ENCODE measurements at regions of chr7 and their contacts with region 1.

Region 1: DNA sequence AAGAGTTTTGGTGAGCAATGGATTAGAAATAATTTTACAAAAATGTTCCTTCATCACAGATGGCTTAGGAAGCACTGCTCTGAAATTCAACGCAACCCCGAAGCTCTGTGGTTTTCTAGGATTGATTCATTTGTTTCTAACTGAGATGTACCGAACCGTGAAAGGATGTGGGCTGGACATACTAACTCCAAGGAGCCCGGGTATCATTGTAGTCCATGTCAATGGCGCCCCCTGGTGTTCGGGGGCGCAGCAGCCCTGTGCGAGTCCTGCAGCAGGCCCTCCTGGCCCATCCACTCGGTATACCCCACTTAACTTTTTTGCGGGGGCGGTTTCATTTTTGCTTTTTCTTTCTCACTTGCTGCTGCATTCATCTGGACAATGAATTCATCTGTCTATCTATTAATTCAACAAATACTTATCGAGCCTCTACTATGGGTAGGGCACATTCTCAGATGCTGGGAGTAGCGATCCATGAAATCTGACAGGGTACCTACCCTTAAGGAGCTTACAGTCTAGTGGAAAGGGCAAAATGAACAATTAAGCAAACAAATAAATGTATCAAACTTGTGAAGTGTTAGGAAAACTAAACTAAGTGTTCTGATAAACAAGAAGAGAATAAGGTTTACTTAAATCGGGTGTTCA is 25.2 kb upstream of the ITPRID1 start:
- DNase-seq: peak; percentile 18
- H3K4me3 Mint-ChIP-seq: no peak overlapping the region
- H3K27ac Mint-ChIP-seq: no peak overlapping the region
- H3K4me1 Mint-ChIP-seq: no peaks in the 10 kb centered on the region
- H3K27me3 Mint-ChIP-seq: no peaks in the 10 kb centered on the region

Region 2: DNA sequence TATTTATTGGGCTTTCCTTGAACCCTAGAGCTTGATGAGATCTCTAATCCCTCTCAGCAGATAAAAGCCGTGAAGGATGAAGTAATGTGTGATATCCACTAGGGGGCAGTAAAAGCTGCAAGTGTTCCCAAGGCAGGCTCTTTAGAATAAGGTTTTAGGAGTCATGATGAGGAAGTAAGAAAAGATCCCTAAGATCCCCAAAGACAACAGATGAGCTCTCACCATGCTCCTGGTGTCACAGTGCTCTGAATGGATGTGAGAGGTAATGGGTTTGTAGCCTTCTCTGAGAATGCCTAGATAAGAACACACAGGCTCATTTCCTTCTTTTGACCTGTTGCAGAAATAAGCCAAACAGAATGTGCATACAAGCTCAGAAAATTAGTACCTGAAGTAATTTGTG is 45.2 kb before region 1 on chr7:
- intact Hi-C with region 1: loop called (anchors 2 kb)
- DNase-seq: no peak
- H3K4me3 Mint-ChIP-seq: no peak overlapping the region
- H3K27ac Mint-ChIP-seq: no peak overlapping the region
- H3K4me1 Mint-ChIP-seq: no peaks in the 10 kb centered on the region
- H3K27me3 Mint-ChIP-seq: no peaks in the 10 kb centered on the region

Region 3: GRCh38 chr7:31776616-31777015 is 287.9 kb after region 1 on chr7:
- intact Hi-C with region 1: no loop called
- DNase-seq: no peak
- H3K4me3 Mint-ChIP-seq: no peak overlapping the region
- H3K27ac Mint-ChIP-seq: no peak overlapping the region
- H3K4me1 Mint-ChIP-seq: no peaks in the 10 kb centered on the region
- H3K27me3 Mint-ChIP-seq: no peaks in the 10 kb centered on the region